ENCODE measurements at regions of chr6 and their contacts with region 1.

Region 1: GRCh38 chr6:26183581-26184366 is 96.5 kb downstream of the HFE start:
- DNase-seq: peak; percentile 60
- ATAC-seq: peak; percentile 86
- H3K4me3 Mint-ChIP-seq: peak overlapping the region; percentile 98
- H3K27ac Mint-ChIP-seq: peak overlapping the region; percentile 91
- H3K4me1 Mint-ChIP-seq: peaks cover 30% of the 10 kb centered on the region
- H3K27me3 Mint-ChIP-seq: no peaks in the 10 kb centered on the region
- CTCF ChIP-seq: no peak

Region 2: DNA sequence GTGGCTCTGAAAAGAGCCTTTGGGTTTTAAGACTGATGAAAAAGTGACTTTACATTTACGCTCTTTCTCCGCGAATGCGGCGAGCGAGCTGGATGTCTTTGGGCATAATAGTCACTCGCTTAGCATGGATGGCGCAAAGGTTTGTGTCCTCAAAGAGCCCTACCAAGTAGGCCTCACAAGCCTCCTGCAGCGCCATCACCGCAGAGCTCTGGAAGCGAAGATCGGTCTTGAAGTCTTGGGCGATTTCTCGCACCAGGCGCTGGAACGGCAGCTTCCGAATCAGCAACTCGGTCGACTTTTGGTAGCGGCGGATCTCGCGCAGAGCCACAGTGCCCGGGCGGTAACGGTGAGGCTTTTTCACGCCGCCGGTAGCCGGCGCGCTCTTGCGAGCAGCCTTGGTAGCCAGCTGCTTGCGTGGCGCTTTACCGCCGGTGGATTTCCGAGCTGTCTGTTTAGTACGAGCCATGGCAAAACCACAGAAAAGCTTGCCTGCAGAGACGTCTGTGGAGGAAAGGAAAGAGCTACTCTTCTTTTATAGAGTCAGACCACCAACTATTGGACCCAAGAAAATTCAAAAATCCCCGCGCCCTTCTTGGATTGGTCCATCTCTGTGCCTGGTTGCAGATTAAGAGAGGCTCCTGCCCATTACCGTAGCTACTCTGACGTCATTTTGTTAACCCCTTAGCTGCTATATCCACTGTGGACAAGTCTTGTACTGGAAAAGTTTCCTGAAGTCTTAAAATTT is 152.0 kb before region 1 on chr6:
- CTCF ChIA-PET with region 1: no interaction called
- POLR2A ChIA-PET with region 1: interaction called, 15 read pairs
- intact Hi-C with region 1: loop called (anchors 2 kb)
- DNase-seq: peak; percentile 55
- ATAC-seq: peak; percentile 62
- H3K4me3 Mint-ChIP-seq: peak overlapping the region; percentile 93
- H3K27ac Mint-ChIP-seq: peak overlapping the region; percentile 98
- H3K4me1 Mint-ChIP-seq: peaks cover 40% of the 10 kb centered on the region
- H3K27me3 Mint-ChIP-seq: peaks cover 2% of the 10 kb centered on the region
- CTCF ChIP-seq: no peak

Region 3: GRCh38 chr6:26103770-26104456 is 79.9 kb before region 1 on chr6:
- CTCF ChIA-PET with region 1: no interaction called
- POLR2A ChIA-PET with region 1: interaction called, 21 read pairs
- intact Hi-C with region 1: no loop called
- DNase-seq: peak; percentile 83
- ATAC-seq: peak; percentile 85
- H3K4me3 Mint-ChIP-seq: peak overlapping the region; percentile 85
- H3K27ac Mint-ChIP-seq: peak overlapping the region; percentile 98
- H3K4me1 Mint-ChIP-seq: peaks cover 12% of the 10 kb centered on the region
- H3K27me3 Mint-ChIP-seq: peaks cover 3% of the 10 kb centered on the region
- CTCF ChIP-seq: no peak

Region 4: DNA sequence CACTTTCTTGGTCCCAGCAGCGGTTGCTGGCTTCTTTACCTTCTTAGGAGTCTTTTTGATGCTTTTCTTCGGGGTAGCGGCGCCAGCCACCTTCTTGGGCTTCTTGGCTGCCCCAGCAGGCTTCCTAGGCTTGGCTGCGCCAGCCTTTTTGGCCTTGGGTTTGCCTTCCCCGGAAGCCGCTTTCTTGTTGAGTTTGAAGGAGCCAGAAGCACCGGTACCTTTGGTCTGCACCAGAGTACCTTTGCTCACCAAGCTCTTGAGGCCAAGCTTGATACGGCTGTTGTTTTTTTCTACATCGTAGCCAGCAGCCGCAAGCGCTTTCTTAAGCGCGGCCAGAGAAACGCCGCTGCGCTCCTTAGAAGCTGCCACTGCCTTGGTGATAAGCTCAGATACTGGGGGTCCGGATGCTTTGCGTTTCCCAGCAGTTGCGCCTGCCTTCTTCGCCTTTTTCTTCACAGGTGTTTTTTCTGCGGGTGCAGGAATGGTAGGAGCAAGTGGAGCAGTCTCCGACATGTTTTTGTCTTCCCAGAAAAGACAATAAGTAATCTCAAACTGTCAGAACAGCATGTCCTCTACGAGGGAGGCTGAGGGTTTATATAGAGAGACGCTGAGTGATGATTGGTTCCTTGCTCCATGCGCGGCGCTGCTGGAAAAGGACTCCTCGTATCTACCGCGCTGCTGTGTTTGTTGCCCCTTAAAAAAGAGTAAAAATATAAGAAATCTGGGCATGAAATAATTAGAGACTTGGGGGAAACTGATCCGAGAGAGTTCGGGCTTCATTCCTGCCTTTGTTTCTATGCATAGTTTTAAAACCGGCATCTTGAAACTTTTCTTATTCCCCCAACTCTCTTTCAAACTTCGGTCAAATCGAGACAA is 50.9 kb after region 1 on chr6:
- CTCF ChIA-PET with region 1: no interaction called
- POLR2A ChIA-PET with region 1: interaction called, 55 read pairs
- intact Hi-C with region 1: no loop called
- DNase-seq: peak; percentile 49
- ATAC-seq: peak; percentile 77
- H3K4me3 Mint-ChIP-seq: peak overlapping the region; percentile 89
- H3K27ac Mint-ChIP-seq: peak overlapping the region; percentile 97
- H3K4me1 Mint-ChIP-seq: peaks cover 26% of the 10 kb centered on the region
- H3K27me3 Mint-ChIP-seq: no peaks in the 10 kb centered on the region
- CTCF ChIP-seq: no peak

Region 5: DNA sequence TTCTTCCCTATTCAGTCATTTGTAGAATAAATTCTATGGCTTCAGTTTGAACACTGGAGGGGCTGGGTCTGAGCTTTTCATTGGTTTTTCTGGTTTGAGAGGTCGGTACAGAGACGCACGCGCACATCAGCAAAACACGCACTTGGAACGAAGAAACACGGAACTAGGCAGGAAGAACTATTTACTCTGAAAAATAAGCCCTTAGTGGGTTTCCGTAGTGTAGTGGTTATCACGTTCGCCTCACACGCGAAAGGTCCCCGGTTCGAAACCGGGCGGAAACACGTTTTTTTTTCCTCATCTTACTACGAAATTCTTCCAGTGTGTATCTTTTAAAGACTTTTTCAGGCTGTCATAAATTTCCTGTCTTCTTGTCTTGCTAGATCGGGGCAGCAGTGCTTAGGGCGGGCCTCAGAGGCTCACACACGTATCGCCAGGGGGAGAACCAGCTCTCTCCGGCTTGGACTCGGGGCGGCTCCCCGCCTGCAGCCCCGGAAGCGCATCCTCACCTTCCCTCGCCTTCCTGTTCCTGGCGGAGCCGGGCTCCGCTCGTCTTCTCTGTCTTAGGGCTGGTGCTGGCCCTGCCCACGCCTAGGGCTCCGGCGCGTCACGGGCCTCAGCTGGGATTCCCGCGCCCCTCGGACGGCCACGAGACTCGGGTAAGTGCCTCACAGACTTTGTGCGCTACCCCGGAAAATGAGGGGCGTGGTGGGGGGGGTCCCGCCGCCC is 354.2 kb after region 1 on chr6 and contains the start of gene HMGN4:
- CTCF ChIA-PET with region 1: no interaction called
- POLR2A ChIA-PET with region 1: interaction called, 15 read pairs
- intact Hi-C with region 1: no loop called
- DNase-seq: peak; percentile 73
- ATAC-seq: peak; percentile 67
- H3K4me3 Mint-ChIP-seq: peak within 1 kb of the TSS; percentile 98
- H3K27ac Mint-ChIP-seq: peak within 1 kb of the TSS; percentile 97
- H3K4me1 Mint-ChIP-seq: peaks cover 65% of the 10 kb centered on the region
- H3K27me3 Mint-ChIP-seq: peaks cover 7% of the 10 kb centered on the region
- CTCF ChIP-seq: no peak
- total RNA-seq, gene HMGN4: 74.5 and 82.2 TPM in 2 replicates

Region 6: GRCh38 chr6:27871924-27872638 is 1688.3 kb after region 1 on chr6:
- CTCF ChIA-PET with region 1: no interaction called
- POLR2A ChIA-PET with region 1: interaction called, 14 read pairs
- intact Hi-C with region 1: no loop called
- DNase-seq: peak; percentile 73
- ATAC-seq: peak; percentile 80
- H3K4me3 Mint-ChIP-seq: peak overlapping the region; percentile 94
- H3K27ac Mint-ChIP-seq: peak overlapping the region; percentile 95
- H3K4me1 Mint-ChIP-seq: peaks cover 36% of the 10 kb centered on the region
- H3K27me3 Mint-ChIP-seq: no peaks in the 10 kb centered on the region
- CTCF ChIP-seq: no peak

Measured in activated B cell treated with CpG ODN at 0.5 μM for 24 hours (primary cell).